ENCODE measurements at regions of chr1 and their contacts with region 1.

Region 1: GRCh38 chr1:112383759-112384356 is 12.2 kb upstream of the CTTNBP2NL start:
- H3K4me3 ChIP-seq: no peak overlapping the region
- H3K27ac ChIP-seq: no peak overlapping the region
- H3K4me1 ChIP-seq: no peaks in the 10 kb centered on the region
- CTCF ChIP-seq: no peak

Region 2: DNA sequence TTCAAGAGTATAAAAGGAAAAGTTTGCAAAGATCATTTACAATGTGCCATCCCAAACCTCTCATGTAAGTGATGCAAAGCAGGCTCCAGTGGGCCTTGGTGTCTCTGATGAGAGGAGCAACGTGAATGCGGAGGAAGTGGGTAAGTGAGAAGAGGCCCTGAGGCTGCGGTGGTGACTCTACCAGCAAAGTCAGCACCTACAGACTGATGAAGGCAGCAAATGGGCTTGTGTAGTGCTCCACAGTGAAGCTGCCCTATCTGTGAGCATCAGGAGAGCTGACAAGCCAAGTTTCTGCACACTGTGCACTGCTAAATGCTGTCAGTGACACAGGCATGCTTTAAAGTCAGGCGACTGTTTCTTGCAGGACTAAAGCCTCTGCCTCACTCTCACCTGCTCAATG is 779.9 kb before region 1 on chr1:
- CTCF ChIA-PET with region 1: no interaction called
- POLR2A ChIA-PET with region 1: interaction called, 14 read pairs
- H3K4me3 ChIP-seq: no peak overlapping the region
- H3K27ac ChIP-seq: no peak overlapping the region
- H3K4me1 ChIP-seq: no peaks in the 10 kb centered on the region
- CTCF ChIP-seq: no peak

Measured in HEK293 (cell line).